Panc1 (cell line): ENCODE measurements at regions of chr11 and their contacts with region 1.

Region 1: GRCh38 chr11:28058333-28058732 is 49.6 kb downstream of the KIF18A start:
- DNase-seq: no peak
- ATAC-seq: no peak
- H3K4me3 ChIP-seq: no peak overlapping the region
- H3K27ac ChIP-seq: no peak overlapping the region
- H3K4me1 ChIP-seq: no peaks in the 10 kb centered on the region; the same call in 1 of the 2 replicates
- H3K27me3 ChIP-seq: no peaks in the 10 kb centered on the region
- CTCF ChIP-seq: no peak

Region 2: GRCh38 chr11:27718346-27718852 is 339.9 kb before region 1 on chr11:
- CTCF ChIA-PET with region 1: no interaction called
- POLR2A ChIA-PET with region 1: no interaction called
- in situ Hi-C with region 1: no loop called
- intact Hi-C with region 1: loop called (anchors 10 kb)
- DNase-seq: no peak
- ATAC-seq: peak; percentile 78
- H3K4me3 ChIP-seq: peak overlapping the region; percentile 66 to 92
- H3K27ac ChIP-seq: peak overlapping the region; percentile 75; the same call in 1 of the 2 replicates
- H3K4me1 ChIP-seq: peaks cover 8% of the 10 kb centered on the region
- H3K27me3 ChIP-seq: peaks cover 39% of the 10 kb centered on the region
- CTCF ChIP-seq: no peak

Region 3: GRCh38 chr11:28086569-28086968 is 28.2 kb after region 1 on chr11:
- CTCF ChIA-PET with region 1: no interaction called
- POLR2A ChIA-PET with region 1: interaction called, 14 read pairs
- in situ Hi-C with region 1: no loop called
- intact Hi-C with region 1: no loop called
- DNase-seq: no peak
- ATAC-seq: no peak
- H3K4me3 ChIP-seq: no peak overlapping the region
- H3K27ac ChIP-seq: no peak overlapping the region
- H3K4me1 ChIP-seq: no peaks in the 10 kb centered on the region
- H3K27me3 ChIP-seq: no peaks in the 10 kb centered on the region
- CTCF ChIP-seq: no peak